Panc1 (cell line): ENCODE measurements at regions of chrX and their contacts with region 1.

Region 1: DNA sequence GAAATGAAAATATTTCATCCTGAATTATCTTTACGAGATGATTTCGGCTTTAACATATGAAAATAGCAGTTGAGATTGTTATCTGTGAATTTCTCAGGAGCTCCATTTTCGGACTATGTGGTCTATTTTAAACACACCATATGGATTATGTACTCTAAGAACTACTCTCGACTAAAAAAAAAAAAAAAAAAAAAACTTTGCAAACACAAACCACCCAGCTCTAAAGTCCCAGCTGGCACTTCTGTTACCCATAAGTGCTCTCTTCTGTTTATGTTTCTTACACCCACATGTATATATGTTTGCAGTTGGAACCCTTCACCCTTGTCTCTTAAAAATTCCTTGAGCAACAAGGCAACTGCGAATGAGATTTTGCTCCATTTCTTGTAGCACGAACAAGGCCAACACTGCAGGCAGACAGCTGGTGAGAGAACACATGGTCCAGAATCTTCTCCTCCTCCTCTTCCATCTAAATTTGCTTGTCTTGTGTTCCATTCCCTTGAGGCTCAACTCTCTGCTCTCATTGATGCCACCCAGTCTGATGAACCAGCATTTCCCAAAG is 172.7 kb upstream of the HCCS start:
- DNase-seq: no peak
- ATAC-seq: no peak
- H3K4me3 ChIP-seq: no peak overlapping the region
- H3K27ac ChIP-seq: no peak overlapping the region
- H3K4me1 ChIP-seq: no peaks in the 10 kb centered on the region
- H3K27me3 ChIP-seq: no peaks in the 10 kb centered on the region
- CTCF ChIP-seq: no peak

Region 2: GRCh38 chrX:10821293-10821692 is 117.2 kb before region 1 on chrX:
- CTCF ChIA-PET with region 1: no interaction called
- POLR2A ChIA-PET with region 1: no interaction called
- in situ Hi-C with region 1: no loop called
- intact Hi-C with region 1: no loop called
- DNase-seq: no peak
- ATAC-seq: no peak
- H3K4me3 ChIP-seq: no peak overlapping the region
- H3K27ac ChIP-seq: no peak overlapping the region
- H3K4me1 ChIP-seq: no peaks in the 10 kb centered on the region
- H3K27me3 ChIP-seq: no peaks in the 10 kb centered on the region
- CTCF ChIP-seq: no peak

Region 3: GRCh38 chrX:11309220-11309619 is 370.8 kb after region 1 on chrX:
- CTCF ChIA-PET with region 1: interaction called, 15 read pairs
- POLR2A ChIA-PET with region 1: no interaction called
- in situ Hi-C with region 1: no loop called
- intact Hi-C with region 1: no loop called
- DNase-seq: no peak
- ATAC-seq: no peak
- H3K4me3 ChIP-seq: no peak overlapping the region
- H3K27ac ChIP-seq: no peak overlapping the region
- H3K4me1 ChIP-seq: no peaks in the 10 kb centered on the region
- H3K27me3 ChIP-seq: no peaks in the 10 kb centered on the region
- CTCF ChIP-seq: no peak